Sigmoid colon (tissue), 7 donors: ENCODE measurements at regions of chr2 and their contacts with region 1.

Region 1: DNA sequence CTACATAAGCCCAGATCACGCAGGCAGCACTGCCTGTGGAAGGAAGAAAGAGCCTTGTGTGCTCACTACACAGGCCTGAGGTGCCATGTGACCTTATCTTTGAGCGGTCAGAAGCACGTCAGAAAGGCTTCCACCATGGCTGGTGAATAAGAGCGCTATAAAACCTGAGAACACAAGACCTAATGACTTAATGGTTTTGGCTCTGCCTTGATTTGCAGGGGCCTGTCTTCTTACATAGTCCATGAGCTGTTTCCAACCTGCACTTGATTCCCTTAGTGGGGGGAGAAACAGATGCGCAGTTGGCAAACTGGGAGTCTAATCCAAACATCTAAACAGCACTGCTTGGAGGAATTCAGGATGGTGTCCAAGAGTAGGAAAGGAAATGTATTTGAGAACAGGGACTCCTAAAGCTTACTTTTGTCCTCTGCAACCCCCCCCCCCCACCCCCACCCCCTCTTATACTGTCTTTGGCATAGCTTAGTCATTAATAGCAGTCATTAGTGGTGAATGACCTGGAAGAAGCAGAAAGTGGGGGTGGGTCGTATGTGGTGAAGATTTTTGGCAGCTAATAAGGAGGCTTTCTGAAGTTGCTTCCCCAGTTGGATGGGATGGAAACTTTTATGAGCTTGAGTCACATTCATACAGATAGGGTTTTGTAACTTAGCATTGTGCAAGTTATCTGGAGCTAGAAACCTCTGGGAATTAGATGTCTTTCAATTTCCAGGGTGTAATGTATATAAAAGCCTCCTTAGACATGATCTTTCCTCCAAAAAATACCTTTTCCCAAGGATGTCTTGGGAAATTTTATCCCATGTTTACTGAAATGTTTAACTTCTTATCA is 454.1 kb downstream of the MEIS1 start:
- DNase-seq: peak; percentile 95
- H3K4me3 ChIP-seq: no peak overlapping the region
- H3K27ac ChIP-seq: peak overlapping the region; percentile 27 to 91 (median 83)
- H3K4me1 ChIP-seq: peaks cover 0 to 68% (median 45%) of the 10 kb centered on the region in 4 donors
- H3K27me3 ChIP-seq: no peaks in the 10 kb centered on the region
- CTCF ChIP-seq: no peak
- EP300 ChIP-seq: peak; percentile 97 to 98 (median 98)
- POLR2A ChIP-seq: peak in 1 of 2 donors; percentile 4

Region 2: DNA sequence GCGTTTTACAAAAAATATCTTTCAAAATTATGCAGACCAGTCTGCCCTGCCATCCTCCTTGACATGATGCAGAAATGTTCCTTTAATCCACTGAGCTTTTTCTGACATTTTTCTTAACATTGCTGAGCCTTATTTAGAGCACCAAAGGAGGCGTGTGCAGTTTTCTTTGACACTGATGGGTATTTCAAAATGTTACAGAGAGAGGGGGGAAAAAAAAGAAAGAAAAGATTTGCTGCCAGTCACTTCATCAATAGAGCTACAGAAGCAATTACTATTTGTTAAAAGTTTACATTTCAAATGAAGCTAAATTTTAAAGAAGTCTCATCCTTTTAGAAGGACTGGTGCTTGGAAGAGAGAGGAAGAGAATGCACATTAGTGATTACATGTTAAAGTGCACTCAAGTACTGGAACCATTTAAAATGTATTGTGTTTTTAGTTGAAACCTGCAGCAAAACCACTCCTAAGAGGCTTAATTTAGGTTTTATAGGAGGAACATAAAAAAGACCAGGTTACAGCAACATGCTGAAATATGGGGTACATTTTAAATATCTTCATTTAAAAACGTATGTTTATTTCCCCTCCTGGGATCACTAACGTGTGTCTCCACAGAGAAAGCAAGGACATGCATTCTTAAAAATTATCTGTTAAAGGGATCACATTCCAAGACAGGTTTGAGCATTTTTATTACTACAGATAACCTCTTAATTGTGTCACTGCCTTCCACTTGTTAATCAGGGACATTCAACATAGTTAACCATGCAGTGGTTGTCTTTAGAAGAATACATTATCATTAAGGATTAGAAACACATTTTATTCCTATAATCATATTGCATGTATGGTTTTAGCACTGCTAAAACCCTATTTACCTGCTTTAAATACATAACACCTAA is 195.7 kb before region 1 on chr2:
- intact Hi-C with region 1: loop called (anchors 2 kb)
- DNase-seq: no peak
- H3K4me3 ChIP-seq: peak overlapping the region; percentile 40 to 56 (median 50)
- H3K27ac ChIP-seq: peak overlapping the region; percentile 76 to 91 (median 85)
- H3K4me1 ChIP-seq: peaks cover 0 to 52% (median 27%) of the 10 kb centered on the region in 4 donors
- H3K27me3 ChIP-seq: no peaks in the 10 kb centered on the region
- CTCF ChIP-seq: no peak
- EP300 ChIP-seq: no peak
- POLR2A ChIP-seq: no peak

Region 3: GRCh38 chr2:66851449-66851872 is 37.5 kb before region 1 on chr2:
- intact Hi-C with region 1: loop called (anchors 2 kb)
- DNase-seq: peak; percentile 81
- H3K4me3 ChIP-seq: no peak overlapping the region
- H3K27ac ChIP-seq: peak overlapping the region in 3 of 4 donors; percentile 87 to 91 (median 89)
- H3K4me1 ChIP-seq: peaks cover 0 to 64% (median 58%) of the 10 kb centered on the region in 4 donors
- H3K27me3 ChIP-seq: no peaks in the 10 kb centered on the region
- CTCF ChIP-seq: no peak
- EP300 ChIP-seq: peak in 1 of 4 donors; percentile 50
- POLR2A ChIP-seq: no peak

Region 4: GRCh38 chr2:67070826-67071225 is 181.8 kb after region 1 on chr2:
- intact Hi-C with region 1: loop called (anchors 5 kb)
- DNase-seq: no peak
- H3K4me3 ChIP-seq: no peak overlapping the region
- H3K27ac ChIP-seq: no peak overlapping the region
- H3K4me1 ChIP-seq: peaks cover 0 to 20% (median 7%) of the 10 kb centered on the region in 4 donors
- H3K27me3 ChIP-seq: no peaks in the 10 kb centered on the region
- CTCF ChIP-seq: no peak
- EP300 ChIP-seq: no peak
- POLR2A ChIP-seq: no peak

Region 5: DNA sequence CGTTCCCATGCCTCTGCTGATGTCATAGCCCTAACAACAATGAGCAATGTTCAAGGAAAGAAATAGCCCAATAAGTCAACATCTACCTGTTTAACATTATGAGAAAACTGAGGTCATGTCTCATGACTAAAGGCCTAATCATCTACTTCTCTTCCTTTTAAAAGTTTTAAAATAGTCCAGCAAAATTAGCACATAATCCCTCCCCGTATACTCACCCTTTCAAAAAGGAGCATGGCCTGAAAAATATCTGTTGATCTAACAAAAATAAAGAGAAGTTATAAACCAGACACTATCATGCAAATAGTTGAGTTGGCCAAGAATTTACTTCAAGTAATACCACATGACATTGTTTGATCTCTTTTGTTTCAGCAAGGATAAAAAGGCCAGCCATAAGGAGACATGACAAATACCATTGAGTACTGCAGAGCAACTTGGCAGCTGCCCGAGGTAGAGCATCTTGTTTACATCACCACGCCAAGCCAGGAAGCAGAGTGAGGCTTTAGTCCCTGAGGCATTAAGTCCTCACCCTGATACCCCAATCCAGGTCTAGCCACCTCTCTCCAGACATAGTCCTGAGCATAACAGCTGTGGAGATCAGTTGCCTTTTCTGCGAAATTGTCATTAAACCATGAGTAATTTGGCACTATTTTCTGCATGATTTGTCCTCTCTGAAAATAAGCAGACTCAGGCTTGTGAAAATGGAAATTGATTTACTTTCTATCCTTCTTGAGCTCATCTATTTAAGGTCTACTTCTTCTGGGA is 370.8 kb after region 1 on chr2:
- intact Hi-C with region 1: loop called (anchors 2 kb)
- DNase-seq: peak; percentile 94
- H3K4me3 ChIP-seq: no peak overlapping the region
- H3K27ac ChIP-seq: peak overlapping the region; percentile 84 to 89 (median 86)
- H3K4me1 ChIP-seq: peaks cover 0 to 28% (median 19%) of the 10 kb centered on the region in 4 donors
- H3K27me3 ChIP-seq: no peaks in the 10 kb centered on the region
- CTCF ChIP-seq: no peak
- EP300 ChIP-seq: peak; percentile 51 to 86 (median 62)
- POLR2A ChIP-seq: no peak

Region 6: GRCh38 chr2:68062680-68063387 is 1173.8 kb after region 1 on chr2 and contains the start of gene C1D:
- intact Hi-C with region 1: no loop called
- DNase-seq: peak; percentile 96
- H3K4me3 ChIP-seq: peak within 1 kb of the TSS; percentile 64 to 84 (median 75)
- H3K27ac ChIP-seq: peak within 1 kb of the TSS; percentile 82 to 88 (median 86)
- H3K4me1 ChIP-seq: peaks cover 0 to 29% (median 26%) of the 10 kb centered on the region in 4 donors
- H3K27me3 ChIP-seq: no peaks in the 10 kb centered on the region
- CTCF ChIP-seq: no peak
- EP300 ChIP-seq: peak in 1 of 4 donors; percentile 29
- POLR2A ChIP-seq: peak in 1 of 2 donors; percentile 33
- total RNA-seq, gene C1D: 37.9 to 77.0 (median 43.6) TPM